Mammary epithelial cell (primary cell): ENCODE measurements at regions of chr12 and their contacts with region 1.

Region 1: DNA sequence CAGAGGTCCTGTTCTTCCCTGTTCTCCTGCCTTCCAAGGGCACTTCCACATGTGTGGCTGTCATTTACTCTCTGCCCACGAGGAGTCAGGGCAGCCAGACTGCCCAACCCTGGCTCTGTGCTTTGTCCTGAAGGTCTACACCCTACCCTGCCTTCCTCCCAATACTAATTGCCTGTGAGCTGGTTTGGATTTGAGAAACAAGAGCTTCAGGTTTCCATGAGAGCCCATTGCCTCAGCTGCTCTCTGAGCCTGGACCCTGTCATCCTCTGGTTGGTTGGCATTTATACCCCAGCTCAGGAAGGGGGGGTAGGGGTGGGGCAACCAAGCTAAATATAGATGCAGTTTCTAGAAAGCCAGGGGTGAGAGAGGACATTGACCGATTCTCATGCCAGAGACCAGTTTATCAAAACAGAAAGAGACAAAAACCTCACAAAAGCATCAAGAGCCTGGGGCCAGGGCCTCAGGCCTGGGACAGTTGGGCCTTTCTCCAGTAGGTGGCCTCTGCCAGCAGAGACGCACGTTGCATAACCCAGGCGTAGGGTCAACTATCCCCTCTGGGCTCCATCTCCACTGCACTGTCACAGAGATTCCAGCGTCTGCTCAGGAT is 34.5 kb downstream of the VDR start:
- DNase-seq: no peak
- H3K4me3 ChIP-seq: no peak overlapping the region
- H3K27ac ChIP-seq: no peak overlapping the region
- H3K4me1 ChIP-seq: peaks cover 10% of the 10 kb centered on the region
- H3K27me3 ChIP-seq: no peaks in the 10 kb centered on the region
- CTCF ChIP-seq: peak; percentile 19 to 46

Region 2: GRCh38 chr12:47758834-47759690 is 111.2 kb before region 1 on chr12 and contains the start of gene RAPGEF3:
- CTCF ChIA-PET with region 1: no interaction called
- dilution Hi-C with region 1: no loop called
- in situ Hi-C with region 1: no loop called
- intact Hi-C with region 1: no loop called
- DNase-seq: peak; percentile 85
- H3K4me3 ChIP-seq: peak within 1 kb of the TSS; percentile 50 to 69 (median 54)
- H3K27ac ChIP-seq: peak within 1 kb of the TSS; percentile 67
- H3K4me1 ChIP-seq: peaks cover 57% of the 10 kb centered on the region
- H3K27me3 ChIP-seq: no peaks in the 10 kb centered on the region
- CTCF ChIP-seq: peak; percentile 33 to 65
- total RNA-seq, gene RAPGEF3: 9.7 to 41.0 TPM

Region 3: GRCh38 chr12:47819896-47820630 is 50.2 kb before region 1 on chr12 and contains the start of gene HDAC7:
- CTCF ChIA-PET with region 1: no interaction called
- dilution Hi-C with region 1: no loop called
- in situ Hi-C with region 1: no loop called
- intact Hi-C with region 1: no loop called
- DNase-seq: peak; percentile 68
- H3K4me3 ChIP-seq: peak within 1 kb of the TSS; percentile 45 to 79 (median 71)
- H3K27ac ChIP-seq: peak within 1 kb of the TSS; percentile 78
- H3K4me1 ChIP-seq: peaks cover 48% of the 10 kb centered on the region
- H3K27me3 ChIP-seq: no peaks in the 10 kb centered on the region
- CTCF ChIP-seq: peak in 1 of 2 donors; percentile 14
- total RNA-seq, gene HDAC7: 17.7 to 72.1 TPM

Region 4: DNA sequence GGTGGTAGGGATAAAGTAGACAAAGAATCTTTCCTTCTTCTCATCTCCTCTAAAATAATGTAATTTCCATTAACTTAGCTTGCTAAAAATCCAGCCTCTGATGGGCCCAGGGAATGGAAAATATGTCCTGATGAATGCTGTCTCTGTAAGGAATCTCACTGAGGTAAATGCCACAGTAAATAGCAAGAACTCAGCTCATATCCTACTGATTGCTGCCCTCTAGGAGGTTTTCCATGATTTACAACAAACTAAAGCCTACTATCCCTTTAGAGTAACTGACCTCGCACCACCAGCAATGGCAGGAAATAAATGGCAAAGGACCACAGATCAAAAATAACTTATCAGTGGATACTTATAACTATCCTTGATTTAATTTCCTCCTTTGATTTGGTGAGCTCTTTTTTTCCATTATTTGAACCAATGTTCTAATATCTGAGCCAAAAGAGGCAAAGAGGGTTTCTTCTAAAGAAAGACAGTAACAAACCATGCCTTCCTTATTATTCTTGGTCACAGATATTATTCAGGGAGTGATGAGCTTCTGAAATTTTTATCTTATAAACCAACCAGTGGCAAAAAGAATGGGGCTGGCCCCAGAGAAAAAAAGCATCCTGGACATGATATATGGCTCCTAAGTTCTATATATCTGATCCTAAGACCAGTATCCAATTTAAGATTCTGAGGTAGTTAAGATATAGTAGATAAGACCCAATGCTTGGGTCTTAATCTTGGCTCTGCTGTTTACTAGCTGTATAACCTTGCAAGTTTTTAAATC is 191.9 kb after region 1 on chr12:
- CTCF ChIA-PET with region 1: no interaction called
- dilution Hi-C with region 1: no loop called
- in situ Hi-C with region 1: no loop called
- intact Hi-C with region 1: loop called (anchors 10 kb)
- DNase-seq: peak; percentile 14
- H3K4me3 ChIP-seq: no peak overlapping the region
- H3K27ac ChIP-seq: no peak overlapping the region
- H3K4me1 ChIP-seq: no peaks in the 10 kb centered on the region
- H3K27me3 ChIP-seq: no peaks in the 10 kb centered on the region
- CTCF ChIP-seq: peak; percentile 11 to 35